AG04449 (cell line): ENCODE measurements at regions of chr6 and their contacts with region 1.

Region 1: GRCh38 chr6:72411872-72412708 is 209.8 kb upstream of the KCNQ5 start:
- DNase-seq: peak; percentile 44
- H3K4me3 ChIP-seq: no peak overlapping the region
- CTCF ChIP-seq: peak; percentile 100

Region 2: GRCh38 chr6:72250664-72251063 is 161.4 kb before region 1 on chr6:
- CTCF ChIA-PET with region 1: interaction called, 64 read pairs
- POLR2A ChIA-PET with region 1: no interaction called
- DNase-seq: no peak
- H3K4me3 ChIP-seq: no peak overlapping the region
- CTCF ChIP-seq: no peak

Region 3: GRCh38 chr6:72390548-72390947 is 21.5 kb before region 1 on chr6:
- CTCF ChIA-PET with region 1: interaction called, 16 read pairs
- POLR2A ChIA-PET with region 1: no interaction called
- DNase-seq: no peak
- H3K4me3 ChIP-seq: no peak overlapping the region
- CTCF ChIP-seq: no peak

Region 4: GRCh38 chr6:72553531-72554511 is 141.7 kb after region 1 on chr6:
- CTCF ChIA-PET with region 1: interaction called, 12 read pairs
- POLR2A ChIA-PET with region 1: no interaction called
- DNase-seq: peak; percentile 56
- H3K4me3 ChIP-seq: no peak overlapping the region
- CTCF ChIP-seq: no peak

Region 5: DNA sequence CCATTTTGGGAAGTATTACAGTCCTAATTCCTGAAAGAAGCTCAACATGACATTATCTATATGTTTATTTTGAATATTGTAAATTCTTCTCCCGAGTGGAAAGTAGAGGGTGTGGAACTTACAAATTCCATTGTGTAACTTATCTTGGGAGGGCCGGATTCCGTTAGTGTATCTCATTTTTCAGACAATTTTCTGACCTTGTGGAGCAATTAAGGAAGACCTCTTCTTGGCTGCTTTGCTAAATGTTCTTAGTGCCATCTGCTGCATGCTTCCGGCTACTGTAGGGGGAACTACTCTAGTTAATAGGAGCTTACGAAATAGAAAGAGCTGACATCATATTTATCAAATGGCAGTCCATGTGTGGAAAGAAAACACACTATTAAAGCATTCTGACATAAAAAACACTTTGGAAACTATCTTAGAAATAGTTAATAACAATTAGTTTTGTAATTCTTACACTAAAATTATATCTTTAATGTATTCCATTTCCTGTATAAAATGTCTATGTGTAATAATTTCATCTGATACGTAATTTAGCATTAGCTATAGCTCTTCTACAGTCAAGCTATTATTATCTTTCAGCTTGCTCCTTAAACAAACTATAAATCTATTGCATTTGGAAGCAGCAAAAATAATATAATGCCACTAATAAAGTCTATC is 168.3 kb after region 1 on chr6:
- CTCF ChIA-PET with region 1: interaction called, 430 read pairs
- POLR2A ChIA-PET with region 1: interaction called, 5 read pairs
- DNase-seq: peak; percentile 77
- H3K4me3 ChIP-seq: no peak overlapping the region
- CTCF ChIP-seq: peak; percentile 66

Region 6: DNA sequence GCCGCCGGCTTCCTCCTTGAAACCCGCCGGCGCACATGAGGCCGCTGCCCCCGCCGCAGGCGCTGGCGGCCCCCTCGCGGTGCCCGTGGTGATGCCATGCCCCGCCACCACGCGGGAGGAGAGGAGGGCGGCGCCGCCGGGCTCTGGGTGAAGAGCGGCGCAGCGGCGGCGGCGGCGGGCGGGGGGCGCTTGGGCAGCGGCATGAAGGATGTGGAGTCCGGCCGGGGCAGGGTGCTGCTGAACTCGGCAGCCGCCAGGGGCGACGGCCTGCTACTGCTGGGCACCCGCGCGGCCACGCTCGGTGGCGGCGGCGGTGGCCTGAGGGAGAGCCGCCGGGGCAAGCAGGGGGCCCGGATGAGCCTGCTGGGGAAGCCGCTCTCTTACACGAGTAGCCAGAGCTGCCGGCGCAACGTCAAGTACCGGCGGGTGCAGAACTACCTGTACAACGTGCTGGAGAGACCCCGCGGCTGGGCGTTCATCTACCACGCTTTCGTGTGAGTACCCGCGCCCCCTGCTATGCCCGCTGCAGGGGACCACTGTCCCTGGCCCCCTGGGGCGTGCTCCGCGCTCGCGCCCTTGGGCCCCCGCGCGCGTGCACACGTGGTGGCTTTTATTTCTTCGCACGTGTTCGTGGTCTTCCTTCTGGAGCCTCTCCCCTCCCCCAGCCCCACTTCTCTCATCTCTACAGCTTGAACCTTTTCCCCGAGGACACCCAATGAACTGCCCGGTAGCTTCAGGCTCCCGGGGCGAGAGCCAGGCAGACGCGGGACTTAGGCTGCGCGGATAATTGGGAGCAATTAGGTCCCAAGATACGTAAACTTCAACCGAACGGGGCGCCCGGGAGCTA is 210.2 kb after region 1 on chr6:
- CTCF ChIA-PET with region 1: interaction called, 199 read pairs
- POLR2A ChIA-PET with region 1: no interaction called
- DNase-seq: no peak
- H3K4me3 ChIP-seq: peak overlapping the region; percentile 69
- CTCF ChIP-seq: peak; percentile 38

Region 7: GRCh38 chr6:72712910-72713309 is 300.8 kb after region 1 on chr6:
- CTCF ChIA-PET with region 1: no interaction called
- POLR2A ChIA-PET with region 1: no interaction called
- DNase-seq: no peak
- H3K4me3 ChIP-seq: no peak overlapping the region
- CTCF ChIP-seq: no peak

Region 8: GRCh38 chr6:72724545-72724944 is 312.5 kb after region 1 on chr6:
- CTCF ChIA-PET with region 1: no interaction called
- POLR2A ChIA-PET with region 1: no interaction called
- DNase-seq: no peak
- H3K4me3 ChIP-seq: no peak overlapping the region
- CTCF ChIP-seq: no peak

Region 9: DNA sequence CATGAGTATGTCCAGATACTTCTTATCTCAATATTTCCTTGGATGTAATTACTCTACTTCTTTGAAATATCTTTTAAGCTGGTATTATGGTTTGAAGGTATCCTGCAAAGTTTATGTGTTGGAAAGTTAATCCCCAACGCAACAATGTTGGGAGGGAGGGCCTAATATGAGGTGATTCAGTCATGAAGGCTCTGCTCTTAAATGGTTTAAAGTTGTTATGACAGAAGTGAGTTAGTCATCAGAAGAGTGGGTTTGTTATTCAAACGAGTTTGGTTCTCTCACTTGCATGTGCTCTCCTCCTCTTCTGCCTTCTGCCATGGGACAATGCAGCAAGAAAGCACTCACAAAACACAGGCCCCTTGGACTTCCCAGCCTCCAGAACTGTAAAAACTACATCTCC is 386.1 kb after region 1 on chr6:
- CTCF ChIA-PET with region 1: no interaction called
- POLR2A ChIA-PET with region 1: no interaction called
- DNase-seq: no peak
- H3K4me3 ChIP-seq: no peak overlapping the region
- CTCF ChIP-seq: no peak